Cardiac septum (tissue), 1 donor: ENCODE measurements at regions of chr7 and their contacts with region 1.

Region 1: GRCh38 chr7:1159891-1160668 is at the start of gene ZFAND2A:
- DNase-seq: peak; percentile 100
- total RNA-seq, gene ZFAND2A: 8.8 TPM

Region 2: DNA sequence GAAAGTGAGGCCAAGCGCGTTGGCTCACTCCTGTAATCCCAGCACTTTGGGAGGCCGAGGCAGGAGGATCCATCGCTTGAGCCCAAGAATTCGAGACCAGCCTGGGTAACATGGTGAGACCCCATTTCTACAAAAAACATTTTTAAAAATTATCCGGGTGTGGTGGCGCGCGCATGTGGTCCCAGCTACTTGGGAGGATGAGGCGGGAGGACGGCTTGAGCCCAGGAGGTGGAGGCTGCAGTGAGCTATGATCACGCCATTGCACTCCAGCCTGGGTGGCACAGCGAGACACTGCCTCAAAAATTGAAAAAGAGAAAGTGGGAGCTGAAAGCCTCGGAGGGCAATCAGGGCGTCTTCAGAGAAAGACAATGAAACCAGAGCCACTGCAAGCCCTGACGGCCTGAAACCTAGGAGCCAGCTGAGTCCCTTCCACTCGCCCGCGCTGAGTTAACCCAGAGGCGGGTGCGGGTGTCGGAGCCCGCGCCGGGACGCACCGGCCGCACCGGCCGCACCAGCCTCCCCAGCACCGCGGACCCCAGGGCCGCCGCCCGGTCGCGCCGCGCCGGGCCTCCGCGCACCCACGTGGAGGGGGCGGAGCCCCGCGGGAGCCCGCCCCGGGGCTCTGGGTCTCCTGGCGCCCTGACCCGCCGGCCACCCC is 22.4 kb before region 1 on chr7:
- intact Hi-C with region 1: loop called (anchors 2 kb)
- DNase-seq: no peak